Activated CD4-positive, alpha-beta T cell treated with anti-CD3 and anti-CD28 coated beads for 36 hours (primary cell): ENCODE measurements at regions of chr2 and their contacts with region 1.

Region 1: GRCh38 chr2:239380831-239381708 is 19.8 kb downstream of the HDAC4 start:
- DNase-seq: peak; percentile 86
- ATAC-seq: peak; percentile 84
- H3K4me3 Mint-ChIP-seq: peak overlapping the region; percentile 62
- H3K27ac Mint-ChIP-seq: peak overlapping the region; percentile 94
- H3K4me1 Mint-ChIP-seq: peaks cover 40% of the 10 kb centered on the region
- H3K27me3 Mint-ChIP-seq: no peaks in the 10 kb centered on the region

Region 2: DNA sequence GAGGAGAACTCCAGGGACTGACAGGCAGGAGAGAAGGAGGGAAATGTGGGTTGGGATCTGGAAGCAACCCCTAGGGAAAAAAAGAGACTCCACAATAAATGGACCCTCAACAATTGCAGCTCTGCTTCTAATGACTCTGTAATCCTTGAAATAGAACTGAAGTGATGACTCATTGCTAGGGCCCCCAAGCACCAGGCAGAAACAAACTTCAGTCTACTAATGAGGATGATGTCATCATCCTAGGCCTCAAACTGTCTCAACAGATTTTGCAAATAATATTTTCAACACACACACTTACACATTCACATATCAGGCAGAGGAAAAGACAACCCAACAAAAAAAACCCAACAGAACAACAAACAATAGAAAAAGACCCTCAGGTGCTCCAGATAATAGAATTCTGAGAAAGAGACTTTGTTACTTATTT is 123.5 kb before region 1 on chr2:
- CTCF ChIA-PET with region 1: interaction called, 3 read pairs
- POLR2A ChIA-PET with region 1: interaction called, 3 read pairs
- intact Hi-C with region 1: loop called (anchors 1 to 2 kb)
- DNase-seq: no peak
- ATAC-seq: peak; percentile 46
- H3K4me3 Mint-ChIP-seq: peak overlapping the region; percentile 32
- H3K27ac Mint-ChIP-seq: peak overlapping the region; percentile 88
- H3K4me1 Mint-ChIP-seq: peaks cover 91% of the 10 kb centered on the region
- H3K27me3 Mint-ChIP-seq: no peaks in the 10 kb centered on the region

Region 3: GRCh38 chr2:239288951-239289511 is 92.0 kb before region 1 on chr2:
- CTCF ChIA-PET with region 1: interaction called, 10 read pairs
- POLR2A ChIA-PET with region 1: interaction called, 6 read pairs
- intact Hi-C with region 1: loop called (anchors 1 kb)
- DNase-seq: peak; percentile 69
- ATAC-seq: peak; percentile 65
- H3K4me3 Mint-ChIP-seq: peak overlapping the region; percentile 36
- H3K27ac Mint-ChIP-seq: peak overlapping the region; percentile 89
- H3K4me1 Mint-ChIP-seq: peaks cover 80% of the 10 kb centered on the region
- H3K27me3 Mint-ChIP-seq: peaks cover 21% of the 10 kb centered on the region

Region 4: GRCh38 chr2:239326831-239327535 is 54.1 kb before region 1 on chr2:
- CTCF ChIA-PET with region 1: interaction called, 6 read pairs
- POLR2A ChIA-PET with region 1: interaction called, 6 read pairs
- intact Hi-C with region 1: loop called (anchors 1 to 2 kb)
- DNase-seq: peak; percentile 89
- ATAC-seq: peak; percentile 85
- H3K4me3 Mint-ChIP-seq: peak overlapping the region; percentile 17
- H3K27ac Mint-ChIP-seq: peak overlapping the region; percentile 74
- H3K4me1 Mint-ChIP-seq: peaks cover 75% of the 10 kb centered on the region
- H3K27me3 Mint-ChIP-seq: peaks cover 5% of the 10 kb centered on the region

Region 5: DNA sequence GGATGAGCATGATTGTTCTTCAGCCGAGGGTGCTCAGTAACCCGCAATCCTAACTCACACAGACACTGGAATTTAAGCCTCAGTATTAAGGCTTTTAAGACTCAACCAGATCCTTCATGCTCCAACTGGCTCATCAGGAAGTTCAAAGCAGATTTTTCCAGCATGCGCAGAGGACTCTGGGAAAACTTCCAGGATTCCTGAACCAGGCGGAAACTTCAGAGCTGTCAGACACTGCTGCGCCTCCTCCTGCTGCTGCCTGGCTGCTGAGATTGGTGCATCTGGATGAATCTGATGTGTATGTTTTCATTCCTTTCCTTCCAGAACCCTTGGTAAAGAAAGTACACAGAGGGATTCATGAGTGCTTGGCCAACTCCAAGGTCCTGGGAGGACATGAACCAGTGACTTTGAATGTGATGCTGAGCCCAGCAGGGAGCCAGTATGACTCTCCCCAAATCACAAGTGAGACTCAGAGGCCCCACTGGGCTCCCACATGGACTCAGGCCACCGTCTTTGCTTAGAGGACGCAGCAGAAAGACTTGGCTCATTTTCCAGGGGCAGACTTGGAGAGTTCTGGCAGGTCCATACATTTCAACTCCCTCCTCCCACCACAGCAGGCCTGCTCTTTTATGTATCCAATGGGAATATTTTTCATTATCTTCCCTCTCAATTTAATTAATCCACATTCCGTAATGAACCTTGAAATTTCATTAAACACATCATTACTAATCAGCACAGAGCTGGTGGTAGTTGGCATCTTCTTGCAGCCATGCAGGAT is 163.3 kb after region 1 on chr2:
- CTCF ChIA-PET with region 1: no interaction called
- POLR2A ChIA-PET with region 1: no interaction called
- intact Hi-C with region 1: loop called in 1 of 2 experiments (anchors 1 kb)
- DNase-seq: peak; percentile 4
- ATAC-seq: no peak
- H3K4me3 Mint-ChIP-seq: no peak overlapping the region
- H3K27ac Mint-ChIP-seq: peak overlapping the region; percentile 83
- H3K4me1 Mint-ChIP-seq: peaks cover 50% of the 10 kb centered on the region
- H3K27me3 Mint-ChIP-seq: peaks cover 7% of the 10 kb centered on the region